Activated CD4-positive, alpha-beta memory T cell treated with anti-CD3 and anti-CD28 coated beads for 36 hours (primary cell): ENCODE measurements at regions of chr6 and their contacts with region 1.

Region 1: DNA sequence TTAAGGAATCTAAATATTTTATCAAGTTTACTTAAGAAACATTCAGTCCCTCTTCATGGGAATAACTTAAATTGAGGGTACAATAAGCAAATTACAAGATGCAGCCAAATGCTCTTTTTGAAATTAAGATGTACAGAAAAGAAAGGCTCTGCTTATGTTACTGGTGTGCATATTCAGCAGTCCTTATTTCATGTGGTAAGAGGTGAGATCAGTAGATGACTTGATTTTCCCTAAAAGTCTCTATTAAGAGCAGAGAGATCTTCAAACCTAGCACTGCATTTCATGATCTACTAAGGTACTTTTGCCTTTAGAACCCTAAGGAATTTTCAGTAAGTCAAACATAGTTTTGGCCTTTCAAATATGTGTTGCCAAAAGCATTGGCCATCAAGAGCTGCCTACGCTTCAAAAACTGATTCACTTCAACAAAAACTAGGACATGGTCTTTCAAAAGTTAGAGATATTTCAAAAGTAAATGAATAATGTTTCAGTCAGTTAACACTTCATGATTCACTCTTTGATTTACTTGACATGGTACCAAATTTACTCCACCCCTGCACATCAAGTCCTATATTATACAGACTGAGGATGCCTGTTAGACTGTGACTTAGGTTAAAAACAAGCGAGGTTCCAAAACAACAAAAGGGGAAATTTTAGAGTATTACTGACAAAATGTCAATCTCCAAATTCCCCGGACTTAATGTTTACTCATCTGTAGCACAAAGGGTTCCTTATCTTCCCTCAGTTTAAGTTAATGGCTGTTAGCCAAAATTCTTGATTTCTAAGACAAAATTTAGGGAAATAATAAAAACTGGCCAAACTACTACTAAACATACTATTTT is 19.2 kb downstream of the C6orf62 start:
- DNase-seq: no peak
- H3K4me3 Mint-ChIP-seq: no peak overlapping the region
- H3K27ac Mint-ChIP-seq: peak overlapping the region; percentile 88
- H3K4me1 Mint-ChIP-seq: peaks cover 61% of the 10 kb centered on the region
- H3K27me3 Mint-ChIP-seq: no peaks in the 10 kb centered on the region

Region 2: GRCh38 chr6:24385536-24386269 is 314.0 kb before region 1 on chr6:
- CTCF ChIA-PET with region 1: no interaction called
- POLR2A ChIA-PET with region 1: no interaction called
- intact Hi-C with region 1: no loop called
- DNase-seq: no peak
- H3K4me3 Mint-ChIP-seq: no peak overlapping the region
- H3K27ac Mint-ChIP-seq: no peak overlapping the region
- H3K4me1 Mint-ChIP-seq: no peaks in the 10 kb centered on the region
- H3K27me3 Mint-ChIP-seq: peaks cover 4% of the 10 kb centered on the region

Region 3: GRCh38 chr6:24666641-24667377 is 32.9 kb before region 1 on chr6 and contains the starts of genes ACOT13 and TDP2:
- CTCF ChIA-PET with region 1: interaction called, 4 read pairs
- POLR2A ChIA-PET with region 1: no interaction called
- intact Hi-C with region 1: loop called (anchors 2 kb)
- DNase-seq: peak; percentile 98
- H3K4me3 Mint-ChIP-seq: peak within 1 kb of the TSS; percentile 95
- H3K27ac Mint-ChIP-seq: peak within 1 kb of the TSS; percentile 93
- H3K4me1 Mint-ChIP-seq: peaks cover 53% of the 10 kb centered on the region
- H3K27me3 Mint-ChIP-seq: no peaks in the 10 kb centered on the region
- total RNA-seq, gene ACOT13: 33.7 to 35.9 TPM
- total RNA-seq, gene TDP2: 47.5 to 48.6 TPM

Region 4: DNA sequence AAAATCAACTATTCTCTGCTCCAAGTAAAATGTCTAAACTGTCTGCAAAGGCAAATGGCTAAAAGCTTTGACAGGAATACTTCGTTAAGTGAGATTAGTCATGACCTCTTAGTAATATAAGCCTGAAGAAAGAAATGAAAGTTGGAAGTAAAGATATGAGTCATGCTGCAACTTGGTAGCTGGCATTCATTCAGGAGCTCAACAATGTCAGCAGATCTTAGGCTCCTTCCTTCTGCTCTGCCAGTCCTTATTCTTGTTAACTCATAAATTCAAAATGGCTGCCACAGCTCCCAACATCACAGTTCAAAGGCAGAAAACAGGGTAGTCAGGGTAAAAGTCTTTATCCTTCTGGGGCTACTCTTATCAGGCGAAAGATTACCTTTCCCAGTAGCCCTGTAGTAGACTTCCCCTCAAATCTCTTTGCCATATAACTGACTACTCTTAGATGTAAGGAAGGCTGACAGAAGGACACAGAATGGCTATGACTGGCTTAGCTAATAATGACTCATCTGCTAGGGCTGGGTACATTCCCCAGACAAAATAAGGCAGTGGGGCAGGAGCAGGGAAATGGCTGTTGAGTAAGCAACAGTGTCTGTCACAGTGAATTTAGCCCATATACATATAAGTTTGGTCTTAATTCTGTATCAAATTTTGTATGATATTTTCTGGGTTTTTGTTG is 43.7 kb after region 1 on chr6:
- CTCF ChIA-PET with region 1: no interaction called
- POLR2A ChIA-PET with region 1: no interaction called
- intact Hi-C with region 1: loop called (anchors 1 kb)
- DNase-seq: peak; percentile 66
- H3K4me3 Mint-ChIP-seq: peak overlapping the region; percentile 47
- H3K27ac Mint-ChIP-seq: peak overlapping the region; percentile 91
- H3K4me1 Mint-ChIP-seq: peaks cover 25% of the 10 kb centered on the region
- H3K27me3 Mint-ChIP-seq: peaks cover 1% of the 10 kb centered on the region

Region 5: GRCh38 chr6:24766680-24767462 is 67.1 kb after region 1 on chr6:
- CTCF ChIA-PET with region 1: interaction called, 6 read pairs
- POLR2A ChIA-PET with region 1: interaction called, 6 read pairs
- intact Hi-C with region 1: loop called (anchors 2 kb)
- DNase-seq: no peak
- H3K4me3 Mint-ChIP-seq: no peak overlapping the region
- H3K27ac Mint-ChIP-seq: no peak overlapping the region
- H3K4me1 Mint-ChIP-seq: peaks cover 4% of the 10 kb centered on the region
- H3K27me3 Mint-ChIP-seq: no peaks in the 10 kb centered on the region